Endothelial cell of umbilical vein (primary cell): ENCODE measurements at regions of chr14 and their contacts with region 1.

Region 1: GRCh38 chr14:21917699-21918436 is 244.2 kb upstream of the OR4E1 start:
- DNase-seq: peak; percentile 91
- H3K4me3 ChIP-seq: no peak overlapping the region
- H3K27ac ChIP-seq: peak overlapping the region; percentile 86
- H3K4me1 ChIP-seq: peaks cover 60% of the 10 kb centered on the region
- H3K27me3 ChIP-seq: no peaks in the 10 kb centered on the region
- CTCF ChIP-seq: peak; percentile 66 to 69
- POLR2A ChIP-seq: peak; percentile 16

Region 2: GRCh38 chr14:21868442-21869046 is 49.3 kb before region 1 on chr14:
- CTCF ChIA-PET with region 1: interaction called, 27 read pairs
- POLR2A ChIA-PET with region 1: no interaction called
- dilution Hi-C with region 1: no loop called
- intact Hi-C with region 1: loop called (anchors 1 kb)
- DNase-seq: peak; percentile 90
- H3K4me3 ChIP-seq: no peak overlapping the region
- H3K27ac ChIP-seq: peak overlapping the region; percentile 88
- H3K4me1 ChIP-seq: peaks cover 29% of the 10 kb centered on the region
- H3K27me3 ChIP-seq: no peaks in the 10 kb centered on the region
- CTCF ChIP-seq: peak; percentile 80 to 83
- POLR2A ChIP-seq: no peak

Region 3: DNA sequence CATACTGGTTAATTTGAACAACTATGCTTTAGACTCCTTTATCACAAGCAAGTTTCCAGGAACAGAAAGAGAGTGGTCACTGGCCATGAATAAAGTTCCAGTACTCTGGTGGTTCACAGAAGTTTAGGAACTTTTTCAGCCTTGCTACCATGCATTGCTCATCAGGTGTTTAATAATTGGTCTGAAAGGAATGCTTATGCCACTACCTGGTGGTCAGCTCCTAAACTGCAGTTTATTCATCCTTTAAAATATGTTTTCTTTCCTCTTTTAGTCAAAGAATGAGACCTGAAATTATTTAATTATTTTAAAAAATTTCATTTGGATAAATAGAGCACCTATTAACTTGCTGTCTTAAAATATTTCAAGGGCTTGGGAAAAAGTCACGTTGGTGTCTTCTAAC is 15.8 kb after region 1 on chr14:
- CTCF ChIA-PET with region 1: interaction called, 121 read pairs
- POLR2A ChIA-PET with region 1: no interaction called
- dilution Hi-C with region 1: no loop called
- intact Hi-C with region 1: loop called (anchors 1 kb)
- DNase-seq: peak; percentile 53
- H3K4me3 ChIP-seq: no peak overlapping the region
- H3K27ac ChIP-seq: no peak overlapping the region
- H3K4me1 ChIP-seq: no peaks in the 10 kb centered on the region
- H3K27me3 ChIP-seq: no peaks in the 10 kb centered on the region
- CTCF ChIP-seq: peak; percentile 35 to 52
- POLR2A ChIP-seq: no peak

Region 4: DNA sequence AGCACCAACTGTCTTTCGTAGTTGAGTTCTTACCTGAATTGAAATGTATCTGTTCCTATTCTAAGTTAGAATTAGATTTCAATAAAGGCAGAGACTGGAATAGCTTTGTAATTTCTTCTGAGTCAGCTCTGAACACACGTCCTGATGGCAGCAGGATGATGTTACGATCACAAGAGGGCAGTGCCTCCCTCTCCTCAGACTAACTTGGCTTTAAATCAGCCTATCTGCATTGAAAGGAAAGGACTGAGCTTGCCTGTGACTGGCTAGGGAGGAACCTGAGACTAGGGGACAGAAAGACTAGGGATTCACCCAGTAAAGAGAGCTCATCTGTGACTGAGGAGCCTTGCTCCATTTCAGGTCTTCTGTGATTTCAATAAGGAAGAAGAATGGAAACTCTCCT is 79.4 kb after region 1 on chr14:
- CTCF ChIA-PET with region 1: interaction called, 19 read pairs
- POLR2A ChIA-PET with region 1: no interaction called
- dilution Hi-C with region 1: no loop called
- intact Hi-C with region 1: no loop called
- DNase-seq: peak; percentile 23
- H3K4me3 ChIP-seq: no peak overlapping the region
- H3K27ac ChIP-seq: no peak overlapping the region
- H3K4me1 ChIP-seq: no peaks in the 10 kb centered on the region
- H3K27me3 ChIP-seq: peaks cover 0 to 1% of the 10 kb centered on the region in 2 experiments
- CTCF ChIP-seq: peak; percentile 6 to 26
- POLR2A ChIP-seq: no peak

Region 5: DNA sequence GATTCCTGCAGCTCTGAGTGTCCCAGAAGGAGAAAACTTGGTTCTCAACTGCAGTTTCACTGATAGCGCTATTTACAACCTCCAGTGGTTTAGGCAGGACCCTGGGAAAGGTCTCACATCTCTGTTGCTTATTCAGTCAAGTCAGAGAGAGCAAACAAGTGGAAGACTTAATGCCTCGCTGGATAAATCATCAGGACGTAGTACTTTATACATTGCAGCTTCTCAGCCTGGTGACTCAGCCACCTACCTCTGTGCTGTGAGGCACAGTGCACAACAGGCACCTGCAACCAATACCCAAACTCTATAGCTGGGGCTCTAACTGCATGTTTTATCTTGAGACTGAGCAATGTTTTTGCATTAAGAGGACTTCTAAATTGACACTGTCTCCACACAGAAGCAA is 134.9 kb after region 1 on chr14:
- CTCF ChIA-PET with region 1: no interaction called
- POLR2A ChIA-PET with region 1: no interaction called
- dilution Hi-C with region 1: no loop called
- intact Hi-C with region 1: no loop called
- DNase-seq: no peak
- H3K4me3 ChIP-seq: no peak overlapping the region
- H3K27ac ChIP-seq: no peak overlapping the region
- H3K4me1 ChIP-seq: no peaks in the 10 kb centered on the region
- H3K27me3 ChIP-seq: peaks cover under 1 to 12% of the 10 kb centered on the region in 2 experiments
- CTCF ChIP-seq: no peak
- POLR2A ChIP-seq: no peak

Region 6: GRCh38 chr14:22106700-22107697 is 189.1 kb after region 1 on chr14:
- CTCF ChIA-PET with region 1: interaction called, 34 read pairs
- POLR2A ChIA-PET with region 1: no interaction called
- dilution Hi-C with region 1: no loop called
- intact Hi-C with region 1: no loop called
- DNase-seq: no peak
- H3K4me3 ChIP-seq: no peak overlapping the region
- H3K27ac ChIP-seq: no peak overlapping the region
- H3K4me1 ChIP-seq: no peaks in the 10 kb centered on the region
- H3K27me3 ChIP-seq: no peaks in the 10 kb centered on the region
- CTCF ChIP-seq: no peak
- POLR2A ChIP-seq: no peak

Region 7: GRCh38 chr14:22386924-22387775 is 469.3 kb after region 1 on chr14:
- CTCF ChIA-PET with region 1: interaction called, 4 read pairs
- POLR2A ChIA-PET with region 1: no interaction called
- dilution Hi-C with region 1: no loop called
- intact Hi-C with region 1: loop called (anchors 5 kb)
- DNase-seq: peak; percentile 77
- H3K4me3 ChIP-seq: no peak overlapping the region
- H3K27ac ChIP-seq: no peak overlapping the region
- H3K4me1 ChIP-seq: peaks cover 6% of the 10 kb centered on the region
- H3K27me3 ChIP-seq: peaks cover 6 to 15% of the 10 kb centered on the region in 2 experiments
- CTCF ChIP-seq: peak; percentile 68 to 70
- POLR2A ChIP-seq: no peak